ENCODE measurements at regions of chr17 and their contacts with region 1.

Region 1: DNA sequence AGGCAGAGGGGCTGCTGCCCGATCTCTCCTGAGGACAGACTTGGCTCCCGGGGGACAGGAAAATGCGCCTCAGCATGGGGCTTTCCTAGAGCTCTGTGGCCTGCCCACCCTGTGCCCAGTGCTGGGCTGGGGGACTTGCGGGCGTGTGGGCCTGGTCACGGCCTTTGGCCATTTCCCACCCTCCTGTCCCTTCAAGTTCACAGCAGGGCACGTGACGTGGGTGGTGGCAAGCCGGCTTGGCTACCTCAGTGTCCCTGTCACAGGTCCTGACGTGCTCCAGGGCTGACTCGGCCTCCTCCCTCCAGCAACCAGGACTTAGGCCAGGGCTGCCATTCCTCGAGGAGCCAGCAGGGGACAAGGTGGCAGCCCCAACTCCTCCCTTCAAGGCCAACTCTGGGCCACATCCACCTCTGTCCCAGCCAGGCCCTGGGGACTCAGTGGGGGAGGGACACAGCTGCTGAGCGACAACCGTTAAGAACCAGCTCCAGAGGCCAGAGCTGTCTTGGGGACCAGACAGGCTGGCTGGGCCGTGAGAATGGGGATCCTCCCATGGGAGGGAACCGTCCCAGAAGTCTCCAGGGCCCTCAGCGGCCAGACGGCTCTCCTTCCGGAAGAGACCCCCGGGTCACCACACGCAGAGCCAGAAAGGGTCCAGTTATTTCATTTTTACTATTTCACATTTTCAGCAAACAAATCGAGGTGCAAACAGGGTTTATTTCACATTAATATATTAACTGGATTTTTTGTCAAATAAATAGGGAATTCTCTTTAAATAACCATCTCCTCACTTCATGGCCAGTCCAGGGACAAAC is 1.1 kb upstream of the UNC13D start:
- DNase-seq: peak; percentile 44 to 73 (median 49)
- H3K4me3 ChIP-seq: no peak overlapping the region
- H3K4me3 Mint-ChIP-seq: peak overlapping the region; percentile 25 to 50 (median 41)
- H3K27ac ChIP-seq: peak overlapping the region; percentile 90
- H3K27ac Mint-ChIP-seq: peak overlapping the region; percentile 47 to 90 (median 77)
- H3K4me1 ChIP-seq: peaks cover 49% of the 10 kb centered on the region
- H3K4me1 Mint-ChIP-seq: peaks cover 5 to 39% (median 22%) of the 10 kb centered on the region in 4 donors
- H3K27me3 ChIP-seq: no peaks in the 10 kb centered on the region
- H3K27me3 Mint-ChIP-seq: no peaks in the 10 kb centered on the region

Region 2: GRCh38 chr17:75679706-75680442 is 165.4 kb before region 1 on chr17:
- CTCF ChIA-PET with region 1: no interaction called
- POLR2A ChIA-PET with region 1: no interaction called
- intact Hi-C with region 1: no loop called
- DNase-seq: no peak
- H3K4me3 ChIP-seq: no peak overlapping the region
- H3K4me3 Mint-ChIP-seq: no peak overlapping the region
- H3K27ac ChIP-seq: no peak overlapping the region
- H3K27ac Mint-ChIP-seq: peak overlapping the region in 2 of 7 donors; percentile 9 to 23
- H3K4me1 ChIP-seq: peaks cover 4% of the 10 kb centered on the region
- H3K4me1 Mint-ChIP-seq: peaks cover 14 to 27% (median 19%) of the 10 kb centered on the region in 4 donors
- H3K27me3 ChIP-seq: no peaks in the 10 kb centered on the region
- H3K27me3 Mint-ChIP-seq: no peaks in the 10 kb centered on the region

Region 3: GRCh38 chr17:75737133-75737962 is 107.9 kb before region 1 on chr17:
- CTCF ChIA-PET with region 1: no interaction called
- POLR2A ChIA-PET with region 1: no interaction called
- intact Hi-C with region 1: no loop called
- DNase-seq: no peak
- H3K4me3 ChIP-seq: no peak overlapping the region
- H3K4me3 Mint-ChIP-seq: no peak overlapping the region
- H3K27ac ChIP-seq: no peak overlapping the region
- H3K27ac Mint-ChIP-seq: no peak overlapping the region
- H3K4me1 ChIP-seq: no peaks in the 10 kb centered on the region
- H3K4me1 Mint-ChIP-seq: peaks cover 2 to 7% (median 4%) of the 10 kb centered on the region in 4 donors
- H3K27me3 ChIP-seq: no peaks in the 10 kb centered on the region
- H3K27me3 Mint-ChIP-seq: no peaks in the 10 kb centered on the region

Region 4: GRCh38 chr17:75827252-75828115 is 17.8 kb before region 1 on chr17:
- CTCF ChIA-PET with region 1: interaction called, 20 read pairs
- POLR2A ChIA-PET with region 1: interaction called, 140 read pairs
- intact Hi-C with region 1: loop called (anchors 1 kb)
- DNase-seq: peak; percentile 55 to 80 (median 71)
- H3K4me3 ChIP-seq: no peak overlapping the region
- H3K4me3 Mint-ChIP-seq: peak overlapping the region; percentile 17 to 73 (median 56)
- H3K27ac ChIP-seq: peak overlapping the region; percentile 59
- H3K27ac Mint-ChIP-seq: peak overlapping the region; percentile 66 to 91 (median 83)
- H3K4me1 ChIP-seq: peaks cover 26% of the 10 kb centered on the region
- H3K4me1 Mint-ChIP-seq: peaks cover 5 to 24% (median 14%) of the 10 kb centered on the region in 4 donors
- H3K27me3 ChIP-seq: no peaks in the 10 kb centered on the region
- H3K27me3 Mint-ChIP-seq: no peaks in the 10 kb centered on the region

Region 5: DNA sequence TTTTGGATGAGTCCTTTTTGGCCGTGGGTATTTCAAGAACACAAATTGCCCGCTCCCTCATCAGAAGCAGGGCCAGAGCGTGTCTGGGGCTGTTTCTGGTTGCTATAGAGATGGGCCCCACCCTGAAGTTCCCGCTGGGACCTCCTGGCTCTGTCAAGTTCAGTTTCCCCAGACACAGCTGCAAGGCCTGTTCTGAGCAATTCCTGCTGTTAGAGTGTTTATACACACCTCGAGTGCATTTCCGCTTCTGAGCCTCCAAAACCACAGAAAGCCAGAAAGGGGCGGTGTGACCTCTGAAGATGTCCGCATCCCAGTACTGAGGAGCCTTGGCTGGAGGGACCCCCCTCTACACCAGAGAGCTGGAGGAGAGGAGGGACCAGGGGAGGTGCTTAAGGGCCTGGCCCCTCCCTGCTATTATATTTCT is 19.2 kb after region 1 on chr17:
- CTCF ChIA-PET with region 1: interaction called, 31 read pairs
- POLR2A ChIA-PET with region 1: interaction called, 563 read pairs
- intact Hi-C with region 1: no loop called
- DNase-seq: peak; percentile 44 to 82 (median 50)
- H3K4me3 ChIP-seq: no peak overlapping the region
- H3K4me3 Mint-ChIP-seq: peak overlapping the region in 7 of 8 donors; percentile 54 to 84 (median 67)
- H3K27ac ChIP-seq: peak overlapping the region; percentile 60
- H3K27ac Mint-ChIP-seq: peak overlapping the region; percentile 90 to 94 (median 93)
- H3K4me1 ChIP-seq: peaks cover 23% of the 10 kb centered on the region
- H3K4me1 Mint-ChIP-seq: peaks cover 15 to 34% (median 25%) of the 10 kb centered on the region in 4 donors
- H3K27me3 ChIP-seq: no peaks in the 10 kb centered on the region
- H3K27me3 Mint-ChIP-seq: no peaks in the 10 kb centered on the region

Region 6: GRCh38 chr17:75877752-75878173 is 32.5 kb after region 1 on chr17:
- CTCF ChIA-PET with region 1: interaction called, 8 read pairs
- POLR2A ChIA-PET with region 1: interaction called, 563 read pairs
- intact Hi-C with region 1: loop called (anchors 1 kb)
- DNase-seq: peak; percentile 71 to 76 (median 75)
- H3K4me3 ChIP-seq: peak overlapping the region; percentile 61 to 76
- H3K4me3 Mint-ChIP-seq: peak overlapping the region; percentile 89 to 95 (median 91)
- H3K27ac ChIP-seq: peak overlapping the region; percentile 56
- H3K27ac Mint-ChIP-seq: peak overlapping the region; percentile 88 to 97 (median 94)
- H3K4me1 ChIP-seq: peaks cover 64% of the 10 kb centered on the region
- H3K4me1 Mint-ChIP-seq: peaks cover 26 to 62% (median 45%) of the 10 kb centered on the region in 4 donors
- H3K27me3 ChIP-seq: no peaks in the 10 kb centered on the region
- H3K27me3 Mint-ChIP-seq: no peaks in the 10 kb centered on the region